ENCODE measurements at regions of chr9 and their contacts with region 1.

Region 1: GRCh38 chr9:6584881-6585597 is 60.5 kb downstream of the GLDC start:
- DNase-seq: no peak

Region 2: GRCh38 chr9:6412487-6413364 is 172.3 kb before region 1 on chr9 and contains the start of gene UHRF2:
- intact Hi-C with region 1: loop called (anchors 5 kb)
- DNase-seq: peak; percentile 94 to 99 (median 98)

Region 3: GRCh38 chr9:6655036-6655435 is 70.0 kb after region 1 on chr9:
- intact Hi-C with region 1: no loop called
- DNase-seq: no peak

Region 4: DNA sequence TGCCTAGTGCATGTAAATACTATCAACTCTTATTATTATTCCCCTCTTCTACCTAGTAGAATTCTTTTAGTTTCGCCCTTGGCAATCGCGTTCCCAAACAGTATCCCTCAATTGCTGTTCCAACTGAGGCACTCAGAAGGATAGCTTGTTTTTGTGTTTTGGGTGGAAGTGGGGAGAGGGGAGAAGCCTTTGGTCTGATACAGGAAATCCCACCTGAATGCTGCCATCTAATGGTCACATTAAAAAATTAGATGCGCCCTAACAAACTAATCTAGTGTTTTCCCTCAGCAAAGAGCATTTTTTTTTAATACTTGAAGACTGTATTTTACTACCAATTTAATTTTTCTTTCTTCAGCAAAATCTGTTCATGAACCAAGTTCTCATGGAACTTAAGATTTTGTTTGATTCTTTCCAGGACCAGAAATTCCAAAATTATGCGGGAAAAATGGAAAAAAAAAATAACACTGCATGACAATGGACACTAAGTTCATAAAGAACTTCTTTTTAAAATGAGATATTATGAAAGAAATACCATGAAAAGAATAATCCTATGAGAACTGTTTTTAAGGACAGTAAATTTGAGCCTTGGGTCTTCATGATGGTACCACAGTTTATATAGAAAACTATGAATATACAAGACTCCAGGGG is 82.7 kb after region 1 on chr9:
- intact Hi-C with region 1: loop called (anchors 2 kb)
- DNase-seq: no peak